Right ventricle myocardium inferior (tissue), 1 donor: ENCODE measurements at regions of chr7 and their contacts with region 1.

Region 1: GRCh38 chr7:94087664-94088352 is 83.7 kb upstream of the BET1 start:
- DNase-seq: no peak
- ATAC-seq: peak; percentile 69

Region 2: GRCh38 chr7:93622036-93623033 is 465.5 kb before region 1 on chr7:
- intact Hi-C with region 1: loop called (anchors 10 kb)
- DNase-seq: no peak
- ATAC-seq: no peak

Region 3: GRCh38 chr7:93715234-93715633 is 372.6 kb before region 1 on chr7:
- intact Hi-C with region 1: loop called (anchors 5 kb)
- DNase-seq: peak; percentile 62
- ATAC-seq: no peak

Region 4: GRCh38 chr7:93799750-93800357 is 288.0 kb before region 1 on chr7:
- intact Hi-C with region 1: loop called (anchors 10 kb)
- DNase-seq: no peak
- ATAC-seq: no peak

Region 5: GRCh38 chr7:93902777-93903423 is 184.9 kb before region 1 on chr7:
- intact Hi-C with region 1: loop called (anchors 2 kb)
- DNase-seq: no peak
- ATAC-seq: peak; percentile 54